ENCODE measurements at regions of chr19 and their contacts with region 1.

Region 1: DNA sequence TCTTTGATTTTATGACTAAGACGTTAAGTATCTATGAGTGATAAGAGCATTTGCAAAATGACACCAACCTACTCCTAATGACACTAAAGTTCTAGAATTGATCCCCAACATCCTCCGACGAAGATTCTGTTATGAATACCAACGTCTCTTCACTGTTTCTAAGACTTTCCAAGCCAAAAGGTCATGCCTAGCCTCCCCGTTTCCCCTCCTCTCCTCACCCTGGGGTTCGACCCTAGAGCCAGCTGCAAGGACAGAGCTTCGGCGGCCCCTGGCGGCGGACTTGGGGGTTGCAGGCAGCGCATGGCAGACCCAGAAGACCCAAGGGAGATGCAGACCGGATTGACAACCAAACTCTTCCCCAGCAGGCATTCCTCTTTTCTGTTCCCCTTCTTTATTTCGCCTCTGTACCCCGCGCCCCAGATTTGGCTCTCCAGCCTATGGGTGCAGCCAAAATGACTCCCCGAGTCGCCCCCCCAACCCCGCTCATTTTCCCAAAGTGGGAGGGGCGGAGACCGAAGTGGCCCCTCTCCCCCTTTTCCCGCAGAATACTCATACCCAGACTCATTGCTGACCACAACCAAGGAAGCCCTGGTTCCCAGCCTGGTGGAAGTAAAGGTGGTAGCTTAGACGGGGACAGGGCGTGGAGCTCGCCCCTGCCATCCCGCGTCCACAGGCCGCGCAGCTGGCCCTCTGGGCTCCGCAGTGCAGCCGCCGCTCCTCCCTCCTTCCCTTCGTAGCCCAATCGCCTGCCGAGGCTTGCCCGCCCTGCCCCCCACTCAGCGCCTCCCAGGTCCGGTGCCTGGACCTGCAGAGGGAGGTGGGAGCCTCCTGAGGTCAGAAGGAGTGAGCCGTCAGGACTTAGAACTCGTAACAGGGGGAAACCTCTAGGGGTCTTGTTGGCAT is 4.1 kb upstream of the EML2 start:
- DNase-seq: peak; percentile 97
- ATAC-seq: peak; percentile 41
- H3K4me3 Mint-ChIP-seq: peak overlapping the region; percentile 92
- H3K27ac Mint-ChIP-seq: peak overlapping the region; percentile 99
- H3K4me1 Mint-ChIP-seq: peaks cover 49% of the 10 kb centered on the region
- H3K27me3 Mint-ChIP-seq: peaks cover 3% of the 10 kb centered on the region
- CTCF ChIP-seq: peak; percentile 99

Region 2: DNA sequence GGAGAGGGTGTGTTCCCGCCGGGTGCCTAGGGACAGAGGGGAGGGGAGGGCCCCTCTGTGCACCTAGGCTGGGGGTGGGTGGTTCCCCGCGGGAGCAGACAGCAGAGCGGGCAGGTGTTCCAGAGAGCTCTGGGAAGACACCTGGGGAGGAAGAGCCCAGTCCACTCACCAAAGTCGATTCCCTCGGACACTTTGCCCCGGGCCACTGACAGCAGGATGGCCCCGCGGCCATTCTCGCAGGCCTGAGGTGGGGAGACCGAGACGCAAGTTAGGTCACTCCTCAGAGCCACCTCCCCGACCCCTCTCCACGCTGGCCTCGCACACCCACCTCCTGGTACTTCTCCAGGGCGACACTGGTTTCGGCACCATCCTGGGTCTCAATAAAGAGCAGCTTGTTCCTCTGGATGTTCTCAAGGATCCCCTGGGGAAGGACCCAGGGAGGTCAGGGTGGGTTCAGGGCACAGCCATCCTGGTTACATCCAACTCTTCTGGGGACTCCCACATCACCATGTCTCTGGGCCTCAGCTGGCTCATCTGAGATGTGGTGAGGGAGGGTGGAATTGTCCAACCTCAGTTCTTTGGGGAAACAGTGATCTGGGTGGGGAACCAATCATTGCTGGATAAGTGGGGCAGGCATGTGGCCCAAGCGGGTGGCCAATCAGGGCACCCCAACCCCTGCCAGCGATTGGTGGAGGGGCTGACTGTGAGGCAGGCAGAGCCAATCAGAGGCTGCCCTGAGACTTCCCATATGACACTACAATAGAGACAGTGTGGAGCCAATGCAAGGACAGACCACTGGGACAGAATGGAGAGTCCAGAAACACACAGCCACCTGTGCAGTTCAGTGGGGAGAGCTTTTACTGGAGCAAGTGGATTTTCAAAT is 290.1 kb before region 1 on chr19:
- CTCF ChIA-PET with region 1: no interaction called
- POLR2A ChIA-PET with region 1: no interaction called
- intact Hi-C with region 1: no loop called
- DNase-seq: no peak
- ATAC-seq: no peak
- H3K4me3 Mint-ChIP-seq: no peak overlapping the region
- H3K27ac Mint-ChIP-seq: no peak overlapping the region
- H3K4me1 Mint-ChIP-seq: no peaks in the 10 kb centered on the region
- H3K27me3 Mint-ChIP-seq: no peaks in the 10 kb centered on the region
- CTCF ChIP-seq: no peak

Region 3: DNA sequence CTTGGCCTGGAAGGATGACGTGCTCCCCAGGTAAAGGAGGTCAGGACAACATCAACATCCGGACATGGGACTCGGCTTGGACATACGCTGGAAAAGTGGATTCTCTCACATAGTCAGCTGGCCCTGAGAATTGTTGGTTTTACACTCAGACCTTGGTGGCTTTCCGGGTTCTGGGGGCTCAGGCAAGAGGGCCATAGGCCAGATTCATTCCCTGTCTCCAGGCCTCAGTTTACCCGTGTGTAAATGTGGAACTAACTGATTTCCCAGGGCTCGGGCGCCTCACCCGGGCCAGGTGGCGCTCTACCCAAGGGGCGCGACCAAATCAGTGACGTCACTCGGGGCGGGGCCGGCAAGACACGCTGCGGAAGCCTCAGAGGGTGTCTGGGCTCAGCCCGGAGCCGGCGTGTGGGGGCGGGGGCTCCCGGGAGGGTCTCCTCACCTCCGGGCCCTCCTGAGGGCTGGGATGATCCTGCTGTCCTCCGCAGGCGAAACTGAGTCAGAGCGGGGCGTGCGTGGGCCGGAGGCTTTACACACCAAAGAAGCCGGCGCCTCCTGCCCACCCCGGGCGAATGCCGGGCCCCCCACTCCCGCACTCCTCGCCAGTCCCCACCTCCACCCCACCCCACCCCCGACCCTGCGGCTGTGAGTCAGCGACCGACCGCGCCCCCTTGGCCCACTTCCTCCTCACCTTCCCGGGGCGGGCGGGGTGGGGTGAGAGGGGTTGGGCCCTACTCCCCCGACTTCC is 136.9 kb before region 1 on chr19:
- CTCF ChIA-PET with region 1: interaction called, 5 read pairs
- POLR2A ChIA-PET with region 1: interaction called, 5 read pairs
- intact Hi-C with region 1: loop called (anchors 5 kb)
- DNase-seq: peak; percentile 100
- ATAC-seq: peak; percentile 83
- H3K4me3 Mint-ChIP-seq: peak overlapping the region; percentile 96
- H3K27ac Mint-ChIP-seq: peak overlapping the region; percentile 95
- H3K4me1 Mint-ChIP-seq: peaks cover 33% of the 10 kb centered on the region
- H3K27me3 Mint-ChIP-seq: no peaks in the 10 kb centered on the region
- CTCF ChIP-seq: peak; percentile 45

Region 4: GRCh38 chr19:45598267-45599001 is 44.8 kb before region 1 on chr19:
- CTCF ChIA-PET with region 1: interaction called, 22 read pairs
- POLR2A ChIA-PET with region 1: interaction called, 6 read pairs
- intact Hi-C with region 1: loop called (anchors 5 kb)
- DNase-seq: peak; percentile 21
- ATAC-seq: peak; percentile 32
- H3K4me3 Mint-ChIP-seq: peak overlapping the region; percentile 57
- H3K27ac Mint-ChIP-seq: no peak overlapping the region
- H3K4me1 Mint-ChIP-seq: peaks cover 24% of the 10 kb centered on the region
- H3K27me3 Mint-ChIP-seq: peaks cover 69% of the 10 kb centered on the region
- CTCF ChIP-seq: no peak

Region 5: GRCh38 chr19:45615795-45616708 is 27.2 kb before region 1 on chr19:
- CTCF ChIA-PET with region 1: interaction called, 15 read pairs
- POLR2A ChIA-PET with region 1: interaction called, 30 read pairs
- intact Hi-C with region 1: no loop called
- DNase-seq: peak; percentile 93
- ATAC-seq: peak; percentile 92
- H3K4me3 Mint-ChIP-seq: no peak overlapping the region
- H3K27ac Mint-ChIP-seq: peak overlapping the region; percentile 43
- H3K4me1 Mint-ChIP-seq: peaks cover 23% of the 10 kb centered on the region
- H3K27me3 Mint-ChIP-seq: no peaks in the 10 kb centered on the region
- CTCF ChIP-seq: no peak

Region 6: GRCh38 chr19:45681391-45682015 is 38.2 kb after region 1 on chr19:
- CTCF ChIA-PET with region 1: interaction called, 10 read pairs
- POLR2A ChIA-PET with region 1: interaction called, 8 read pairs
- intact Hi-C with region 1: no loop called
- DNase-seq: peak; percentile 91
- ATAC-seq: peak; percentile 79
- H3K4me3 Mint-ChIP-seq: peak overlapping the region; percentile 67
- H3K27ac Mint-ChIP-seq: peak overlapping the region; percentile 46
- H3K4me1 Mint-ChIP-seq: peaks cover 17% of the 10 kb centered on the region
- H3K27me3 Mint-ChIP-seq: peaks cover 3% of the 10 kb centered on the region
- CTCF ChIP-seq: peak; percentile 99